IMR-90 (cell line): ENCODE measurements at regions of chr4 and their contacts with region 1.

Region 1: DNA sequence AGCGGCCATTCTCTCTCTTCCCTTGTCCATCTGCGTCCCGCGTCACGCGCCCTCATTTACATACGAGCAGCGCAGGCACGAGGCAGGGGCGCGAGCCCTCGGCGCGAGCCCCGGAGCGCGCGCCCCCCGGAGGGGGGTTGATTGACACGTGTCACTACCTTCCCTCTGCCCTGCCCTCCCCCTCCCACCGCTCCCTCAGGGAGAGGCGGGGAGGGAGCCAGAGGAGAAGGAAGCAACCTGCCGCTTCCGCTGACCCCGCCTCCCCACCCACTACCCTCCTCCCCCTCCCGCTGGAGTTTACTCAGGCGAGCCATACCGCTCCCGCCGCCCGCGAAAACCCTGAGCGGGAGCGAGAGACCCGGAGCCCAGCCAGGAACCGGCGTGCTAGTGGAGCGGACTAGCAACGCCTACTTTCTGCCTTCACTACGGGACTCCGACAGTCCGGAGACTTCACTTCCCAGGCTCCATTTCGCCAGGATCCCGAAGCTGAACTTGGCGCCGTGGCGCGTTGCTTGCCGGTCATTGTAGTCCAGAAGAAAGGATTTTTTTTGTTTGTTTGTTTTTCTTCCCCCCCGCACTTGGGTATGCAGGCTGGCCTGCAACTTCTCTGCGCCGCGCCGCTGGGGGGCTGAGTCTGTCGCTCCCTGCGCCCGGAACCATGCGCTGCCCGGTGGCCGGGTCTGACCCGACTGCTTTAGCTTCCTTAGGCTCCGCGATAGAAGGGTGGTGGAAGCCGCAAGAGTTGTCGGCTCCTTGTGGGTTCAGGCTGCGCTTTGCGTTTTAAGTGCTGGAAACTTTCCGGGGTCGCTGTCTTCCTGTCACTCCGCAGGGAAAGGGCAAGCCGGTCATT is at the start of gene LCORL:
- DNase-seq: peak; percentile 95
- ATAC-seq: peak; percentile 86
- H3K4me3 ChIP-seq: peak within 1 kb of the TSS; percentile 82
- H3K27ac ChIP-seq: peak within 1 kb of the TSS; percentile 57
- H3K4me1 ChIP-seq: no peaks in the 10 kb centered on the region
- H3K27me3 ChIP-seq: no peaks in the 10 kb centered on the region
- CTCF ChIP-seq: no peak; the same call in 1 of the 2 replicates
- POLR2A ChIP-seq: no peak
- RAD21 ChIP-seq: 0 out of 2 replicates have a peak, but pooled peaks have one; percentile 1
- total RNA-seq, gene LCORL: 5.0 and 11.4 TPM in 2 replicates

Region 2: DNA sequence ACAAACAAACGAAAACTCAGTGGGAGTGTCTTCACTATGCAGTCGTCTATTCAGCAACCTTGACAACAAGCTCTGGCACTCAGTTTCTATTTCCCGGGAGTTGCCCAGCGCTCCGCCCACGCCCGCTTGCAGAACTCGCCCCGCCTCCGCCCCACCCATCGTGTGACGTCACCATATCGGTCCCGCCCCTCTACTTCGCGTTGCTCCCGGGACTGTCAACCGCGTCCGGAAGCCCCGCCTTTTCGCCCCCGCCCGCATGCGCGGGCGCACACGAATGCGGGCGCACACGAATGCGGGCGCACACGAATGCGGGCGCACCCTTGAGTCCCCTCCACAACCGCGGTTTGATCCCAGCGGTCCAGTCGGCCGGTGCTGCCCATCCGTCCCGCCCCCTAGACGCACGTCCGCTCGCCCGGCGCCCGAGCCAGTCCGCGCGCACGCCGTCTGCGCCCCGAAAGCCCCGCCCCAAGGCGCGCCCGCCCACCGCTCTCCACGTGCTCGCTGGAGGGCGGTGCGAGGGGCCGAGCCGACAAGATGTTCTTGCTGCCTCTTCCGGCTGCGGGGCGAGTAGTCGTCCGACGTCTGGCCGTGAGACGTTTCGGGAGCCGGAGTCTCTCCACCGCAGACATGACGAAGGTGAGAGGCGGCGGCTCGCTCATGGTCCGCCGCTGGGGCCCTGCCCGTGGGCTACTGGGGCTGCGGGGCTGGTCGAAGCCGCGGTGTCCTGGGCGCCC is 444.8 kb before region 1 on chr4 and contains the start of gene LAP3:
- CTCF ChIA-PET with region 1: no interaction called
- POLR2A ChIA-PET with region 1: no interaction called
- dilution Hi-C with region 1: no loop called
- in situ Hi-C with region 1: loop called (anchors 25 kb)
- intact Hi-C with region 1: loop called (anchors 5 kb)
- DNase-seq: peak; percentile 96
- ATAC-seq: peak; percentile 97
- H3K4me3 ChIP-seq: peak within 1 kb of the TSS; percentile 65
- H3K27ac ChIP-seq: peak within 1 kb of the TSS; percentile 62
- H3K4me1 ChIP-seq: peaks cover 6% of the 10 kb centered on the region; the same call in 1 of the 2 replicates
- H3K27me3 ChIP-seq: no peaks in the 10 kb centered on the region
- CTCF ChIP-seq: 0 out of 2 replicates have a peak, but pooled peaks have one; percentile 1
- POLR2A ChIP-seq: peak; percentile 95
- RAD21 ChIP-seq: no peak
- total RNA-seq, gene LAP3: 91.6 and 93.0 TPM in 2 replicates

Region 3: GRCh38 chr4:17647927-17648326 is 374.0 kb before region 1 on chr4:
- CTCF ChIA-PET with region 1: no interaction called
- POLR2A ChIA-PET with region 1: no interaction called
- dilution Hi-C with region 1: no loop called
- in situ Hi-C with region 1: no loop called
- intact Hi-C with region 1: no loop called
- DNase-seq: no peak
- ATAC-seq: no peak
- H3K4me3 ChIP-seq: no peak overlapping the region
- H3K27ac ChIP-seq: no peak overlapping the region
- H3K4me1 ChIP-seq: no peaks in the 10 kb centered on the region
- H3K27me3 ChIP-seq: peaks cover 2% of the 10 kb centered on the region; the same call in 1 of the 2 replicates
- CTCF ChIP-seq: no peak
- POLR2A ChIP-seq: no peak
- RAD21 ChIP-seq: no peak

Region 4: DNA sequence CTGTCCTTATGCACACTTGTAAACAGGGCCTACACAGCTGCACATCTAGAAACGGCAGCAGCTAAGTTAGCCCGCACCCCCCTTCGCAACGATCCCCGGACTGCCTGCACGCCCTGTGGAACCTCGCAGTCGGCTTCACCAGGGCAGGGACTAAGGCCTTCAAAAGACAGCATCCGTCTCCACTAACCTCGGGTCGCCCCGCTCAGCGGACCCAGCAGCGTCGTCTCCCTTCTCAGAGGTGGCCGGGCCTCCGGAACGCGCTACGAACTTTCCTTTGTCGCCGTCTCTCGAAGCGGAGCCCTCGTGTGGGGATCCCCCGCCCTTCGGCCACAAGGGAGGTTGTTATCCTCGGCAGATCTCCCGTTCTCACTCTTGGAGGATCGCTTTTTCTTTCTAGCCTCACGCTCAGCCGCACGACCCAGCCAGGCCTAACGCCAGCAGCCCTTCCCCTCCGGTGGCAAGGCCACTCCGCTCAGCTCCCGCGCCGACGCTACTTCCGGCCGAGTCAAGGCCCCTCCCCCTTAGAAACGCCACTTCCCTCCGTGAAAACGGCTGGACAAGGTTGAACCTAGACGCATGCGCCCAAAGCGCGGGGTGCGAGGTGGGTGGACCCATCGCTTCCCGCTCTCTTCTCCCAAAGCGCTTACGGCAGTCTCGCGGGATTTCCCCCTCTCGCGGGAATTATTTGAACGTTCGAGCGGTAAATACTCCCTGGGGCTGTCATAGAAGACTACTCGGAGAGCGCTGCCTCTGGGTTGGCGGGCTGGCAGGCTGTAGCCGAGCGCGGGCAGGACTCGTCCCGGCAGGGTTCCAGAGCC is 211.5 kb before region 1 on chr4 and contains the starts of genes DCAF16 and NCAPG:
- CTCF ChIA-PET with region 1: interaction called, 3 read pairs
- POLR2A ChIA-PET with region 1: no interaction called
- dilution Hi-C with region 1: no loop called
- in situ Hi-C with region 1: loop called (anchors 5 kb)
- intact Hi-C with region 1: loop called (anchors 2 kb)
- DNase-seq: peak; percentile 99
- ATAC-seq: peak; percentile 92
- H3K4me3 ChIP-seq: peak within 1 kb of the TSS; percentile 82
- H3K27ac ChIP-seq: peak within 1 kb of the TSS; percentile 86
- H3K4me1 ChIP-seq: peaks cover 2% of the 10 kb centered on the region; the same call in 1 of the 2 replicates
- H3K27me3 ChIP-seq: no peaks in the 10 kb centered on the region
- CTCF ChIP-seq: no peak
- POLR2A ChIP-seq: peak; percentile 97
- RAD21 ChIP-seq: no peak
- total RNA-seq, gene DCAF16: 23.6 and 31.5 TPM in 2 replicates
- total RNA-seq, gene NCAPG: 26.7 and 41.7 TPM in 2 replicates

Region 5: DNA sequence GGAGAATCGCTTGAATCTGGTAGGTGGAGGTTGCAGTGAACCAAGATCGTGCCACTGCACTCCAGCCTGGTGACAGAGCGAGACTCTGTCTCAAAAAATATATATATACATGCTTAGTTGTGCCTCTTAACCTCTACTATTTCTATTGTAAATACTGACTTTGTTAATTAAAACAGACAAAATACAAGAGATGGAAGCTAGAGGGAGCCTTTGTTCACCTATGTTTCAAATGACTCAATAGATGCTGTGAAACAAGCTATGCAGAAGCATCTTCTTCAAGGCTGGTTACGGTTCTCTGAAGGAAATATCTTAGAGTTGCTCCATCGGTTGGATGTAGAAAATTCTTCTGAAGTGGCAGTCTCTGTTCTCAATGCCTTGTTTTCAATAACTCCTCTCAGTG is 204.9 kb before region 1 on chr4:
- CTCF ChIA-PET with region 1: no interaction called
- POLR2A ChIA-PET with region 1: no interaction called
- dilution Hi-C with region 1: no loop called
- in situ Hi-C with region 1: loop called (anchors 5 kb)
- intact Hi-C with region 1: loop called (anchors 2 kb)
- DNase-seq: peak; percentile 78
- ATAC-seq: peak; percentile 89
- H3K4me3 ChIP-seq: no peak overlapping the region
- H3K27ac ChIP-seq: no peak overlapping the region
- H3K4me1 ChIP-seq: no peaks in the 10 kb centered on the region
- H3K27me3 ChIP-seq: no peaks in the 10 kb centered on the region
- CTCF ChIP-seq: peak; percentile 70
- POLR2A ChIP-seq: no peak
- RAD21 ChIP-seq: peak; percentile 70

Region 6: DNA sequence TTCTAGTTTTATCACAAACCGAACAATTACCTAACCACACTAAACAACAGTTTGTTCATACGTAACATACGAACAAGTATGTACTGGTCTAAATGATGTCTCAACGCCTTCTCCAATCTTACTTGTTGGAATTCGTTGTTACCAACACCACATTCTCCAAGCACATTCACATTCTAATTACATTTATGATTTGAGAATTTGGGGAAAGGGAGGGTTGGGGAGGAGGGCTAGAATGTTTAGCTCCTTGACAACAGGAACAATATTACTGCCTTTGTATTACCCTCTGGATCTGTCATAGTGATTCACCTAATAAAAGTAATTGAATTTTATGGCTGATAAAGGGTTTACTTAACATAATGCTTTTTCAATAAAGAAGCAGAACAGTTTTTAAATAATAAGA is 24.8 kb before region 1 on chr4:
- CTCF ChIA-PET with region 1: no interaction called
- POLR2A ChIA-PET with region 1: no interaction called
- dilution Hi-C with region 1: no loop called
- in situ Hi-C with region 1: no loop called
- intact Hi-C with region 1: loop called (anchors 2 kb)
- DNase-seq: no peak
- ATAC-seq: no peak
- H3K4me3 ChIP-seq: no peak overlapping the region
- H3K27ac ChIP-seq: no peak overlapping the region
- H3K4me1 ChIP-seq: no peaks in the 10 kb centered on the region
- H3K27me3 ChIP-seq: no peaks in the 10 kb centered on the region
- CTCF ChIP-seq: no peak
- POLR2A ChIP-seq: no peak
- RAD21 ChIP-seq: no peak

Region 7: GRCh38 chr4:18057821-18058533 is 36.0 kb after region 1 on chr4:
- CTCF ChIA-PET with region 1: no interaction called
- POLR2A ChIA-PET with region 1: no interaction called
- dilution Hi-C with region 1: no loop called
- in situ Hi-C with region 1: no loop called
- intact Hi-C with region 1: loop called (anchors 2 kb)
- DNase-seq: no peak
- ATAC-seq: peak; percentile 44; the same call in 1 of the 2 replicates
- H3K4me3 ChIP-seq: peak overlapping the region; percentile 45; the same call in 1 of the 2 replicates
- H3K27ac ChIP-seq: no peak overlapping the region; the same call in 1 of the 2 replicates
- H3K4me1 ChIP-seq: no peaks in the 10 kb centered on the region
- H3K27me3 ChIP-seq: no peaks in the 10 kb centered on the region
- CTCF ChIP-seq: no peak
- POLR2A ChIP-seq: no peak
- RAD21 ChIP-seq: no peak

Region 8: GRCh38 chr4:18167831-18168230 is 145.9 kb after region 1 on chr4:
- CTCF ChIA-PET with region 1: no interaction called
- POLR2A ChIA-PET with region 1: no interaction called
- dilution Hi-C with region 1: no loop called
- in situ Hi-C with region 1: no loop called
- intact Hi-C with region 1: no loop called
- DNase-seq: no peak
- ATAC-seq: no peak
- H3K4me3 ChIP-seq: no peak overlapping the region
- H3K27ac ChIP-seq: no peak overlapping the region
- H3K4me1 ChIP-seq: no peaks in the 10 kb centered on the region
- H3K27me3 ChIP-seq: no peaks in the 10 kb centered on the region
- CTCF ChIP-seq: no peak
- POLR2A ChIP-seq: no peak
- RAD21 ChIP-seq: no peak

Region 9: GRCh38 chr4:18366892-18367291 is 344.9 kb after region 1 on chr4:
- CTCF ChIA-PET with region 1: no interaction called
- POLR2A ChIA-PET with region 1: no interaction called
- dilution Hi-C with region 1: no loop called
- in situ Hi-C with region 1: no loop called
- intact Hi-C with region 1: loop called (anchors 10 kb)
- DNase-seq: peak; percentile 6
- ATAC-seq: peak; percentile 53; the same call in 1 of the 2 replicates
- H3K4me3 ChIP-seq: no peak overlapping the region
- H3K27ac ChIP-seq: no peak overlapping the region
- H3K4me1 ChIP-seq: no peaks in the 10 kb centered on the region
- H3K27me3 ChIP-seq: no peaks in the 10 kb centered on the region
- CTCF ChIP-seq: peak; percentile 37; the same call in 1 of the 2 replicates
- POLR2A ChIP-seq: no peak
- RAD21 ChIP-seq: peak; percentile 32; the same call in 1 of the 2 replicates